MCF 10A (cell line): ENCODE measurements at regions of chr15 and their contacts with region 1.

Region 1: DNA sequence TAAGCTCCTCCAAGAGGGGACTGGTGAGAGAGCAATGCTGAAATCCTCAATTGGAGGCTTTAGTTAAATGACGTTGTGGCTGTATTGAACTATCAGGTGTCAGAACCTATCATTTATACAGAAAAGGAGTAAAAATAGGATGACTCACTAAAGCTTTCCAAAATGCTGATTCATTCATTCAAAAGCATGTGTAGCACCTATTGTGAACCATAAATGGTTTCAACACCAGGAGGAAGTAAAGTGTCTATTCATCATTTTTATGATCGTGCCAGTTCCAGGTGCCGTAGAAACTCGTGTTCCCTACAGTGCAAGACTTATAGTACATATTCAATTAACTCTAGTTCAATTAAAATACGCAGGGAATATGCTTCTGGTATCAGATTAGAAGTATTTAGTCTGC is 66.5 kb upstream of the ARRDC4 start:
- DNase-seq: peak; percentile 42
- H3K4me3 Mint-ChIP-seq: no peak overlapping the region
- H3K27ac Mint-ChIP-seq: no peak overlapping the region
- H3K4me1 Mint-ChIP-seq: no peaks in the 10 kb centered on the region
- H3K27me3 Mint-ChIP-seq: peaks cover 2% of the 10 kb centered on the region
- CTCF ChIP-seq: no peak

Region 2: GRCh38 chr15:97791824-97792792 is 101.9 kb before region 1 on chr15:
- CTCF ChIA-PET with region 1: no interaction called
- POLR2A ChIA-PET with region 1: no interaction called
- intact Hi-C with region 1: no loop called
- DNase-seq: no peak
- H3K4me3 Mint-ChIP-seq: no peak overlapping the region
- H3K27ac Mint-ChIP-seq: no peak overlapping the region
- H3K4me1 Mint-ChIP-seq: no peaks in the 10 kb centered on the region
- H3K27me3 Mint-ChIP-seq: peaks cover 48% of the 10 kb centered on the region
- CTCF ChIP-seq: no peak

Region 3: GRCh38 chr15:98070137-98070536 is 176.2 kb after region 1 on chr15:
- CTCF ChIA-PET with region 1: no interaction called
- POLR2A ChIA-PET with region 1: no interaction called
- intact Hi-C with region 1: no loop called
- DNase-seq: no peak
- H3K4me3 Mint-ChIP-seq: no peak overlapping the region
- H3K27ac Mint-ChIP-seq: no peak overlapping the region
- H3K4me1 Mint-ChIP-seq: no peaks in the 10 kb centered on the region
- H3K27me3 Mint-ChIP-seq: no peaks in the 10 kb centered on the region
- CTCF ChIP-seq: no peak

Region 4: GRCh38 chr15:98187549-98187948 is 293.6 kb after region 1 on chr15:
- CTCF ChIA-PET with region 1: interaction called, 12 read pairs
- POLR2A ChIA-PET with region 1: no interaction called
- intact Hi-C with region 1: no loop called
- DNase-seq: no peak
- H3K4me3 Mint-ChIP-seq: no peak overlapping the region
- H3K27ac Mint-ChIP-seq: no peak overlapping the region
- H3K4me1 Mint-ChIP-seq: no peaks in the 10 kb centered on the region
- H3K27me3 Mint-ChIP-seq: peaks cover 11% of the 10 kb centered on the region
- CTCF ChIP-seq: no peak